Activated CD8-positive, alpha-beta T cell treated with anti-CD3 and anti-CD28 coated beads, Interleukin-2, amount 10 ng/mL, durations not matched to agents 7 days and 5 days (primary cell): ENCODE measurements at regions of chr3 and their contacts with region 1.

Region 1: GRCh38 chr3:69120879-69121464 is 1.4 kb downstream of the LMOD3 start:
- DNase-seq: peak; percentile 90
- ATAC-seq: peak; percentile 72
- H3K4me3 Mint-ChIP-seq: no peak overlapping the region
- H3K27ac Mint-ChIP-seq: no peak overlapping the region
- H3K4me1 Mint-ChIP-seq: peaks cover 5% of the 10 kb centered on the region
- H3K27me3 Mint-ChIP-seq: peaks cover 2% of the 10 kb centered on the region

Region 2: GRCh38 chr3:69092030-69092516 is 28.9 kb before region 1 on chr3:
- CTCF ChIA-PET with region 1: interaction called, 14 read pairs
- POLR2A ChIA-PET with region 1: interaction called, 3 read pairs
- DNase-seq: peak; percentile 55
- ATAC-seq: peak; percentile 70
- H3K4me3 Mint-ChIP-seq: peak overlapping the region; percentile 81
- H3K27ac Mint-ChIP-seq: peak overlapping the region; percentile 88
- H3K4me1 Mint-ChIP-seq: peaks cover 84% of the 10 kb centered on the region
- H3K27me3 Mint-ChIP-seq: no peaks in the 10 kb centered on the region

Region 3: DNA sequence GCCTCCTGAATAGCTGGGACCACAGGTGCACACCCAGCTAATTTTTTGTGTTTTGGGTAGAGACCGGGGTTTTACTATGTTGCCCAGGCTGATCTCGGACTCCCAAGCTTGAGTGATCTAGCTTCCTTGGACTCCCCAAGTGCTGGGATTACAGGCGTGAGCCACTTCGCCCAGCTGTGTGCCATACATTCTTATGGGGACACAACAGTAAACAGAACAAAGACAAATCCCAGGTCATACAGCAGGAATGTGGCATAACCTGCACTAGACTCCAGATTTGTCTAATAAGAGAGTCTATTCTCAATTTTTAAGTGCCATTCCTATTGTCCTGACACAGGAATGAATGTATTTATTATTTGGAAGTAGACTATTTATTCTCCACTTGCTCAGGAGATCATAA is 18.6 kb before region 1 on chr3:
- CTCF ChIA-PET with region 1: interaction called, 35 read pairs
- POLR2A ChIA-PET with region 1: no interaction called
- DNase-seq: no peak
- ATAC-seq: no peak
- H3K4me3 Mint-ChIP-seq: no peak overlapping the region
- H3K27ac Mint-ChIP-seq: no peak overlapping the region
- H3K4me1 Mint-ChIP-seq: peaks cover 49% of the 10 kb centered on the region
- H3K27me3 Mint-ChIP-seq: no peaks in the 10 kb centered on the region

Region 4: GRCh38 chr3:69425261-69425660 is 304.3 kb after region 1 on chr3:
- CTCF ChIA-PET with region 1: interaction called, 14 read pairs
- POLR2A ChIA-PET with region 1: no interaction called
- DNase-seq: peak; percentile 53
- ATAC-seq: peak; percentile 64
- H3K4me3 Mint-ChIP-seq: no peak overlapping the region
- H3K27ac Mint-ChIP-seq: no peak overlapping the region
- H3K4me1 Mint-ChIP-seq: no peaks in the 10 kb centered on the region
- H3K27me3 Mint-ChIP-seq: peaks cover 10% of the 10 kb centered on the region

Region 5: GRCh38 chr3:70426071-70426470 is 1305.1 kb after region 1 on chr3:
- CTCF ChIA-PET with region 1: no interaction called
- POLR2A ChIA-PET with region 1: no interaction called
- DNase-seq: no peak
- ATAC-seq: no peak
- H3K4me3 Mint-ChIP-seq: no peak overlapping the region
- H3K27ac Mint-ChIP-seq: no peak overlapping the region
- H3K4me1 Mint-ChIP-seq: no peaks in the 10 kb centered on the region
- H3K27me3 Mint-ChIP-seq: peaks cover 2% of the 10 kb centered on the region